ENCODE measurements at regions of chr2 and their contacts with region 1.

Region 1: GRCh38 chr2:29841386-29842004 is 79.9 kb downstream of the ALK start:
- DNase-seq: peak; percentile 27
- ATAC-seq: peak; percentile 63; the same call in 1 of the 2 replicates
- H3K4me3 ChIP-seq: no peak overlapping the region
- H3K27ac ChIP-seq: no peak overlapping the region
- H3K4me1 ChIP-seq: no peaks in the 10 kb centered on the region
- H3K27me3 ChIP-seq: peaks cover 4% of the 10 kb centered on the region; the same call in 1 of the 2 replicates
- CTCF ChIP-seq: peak; percentile 93

Region 2: DNA sequence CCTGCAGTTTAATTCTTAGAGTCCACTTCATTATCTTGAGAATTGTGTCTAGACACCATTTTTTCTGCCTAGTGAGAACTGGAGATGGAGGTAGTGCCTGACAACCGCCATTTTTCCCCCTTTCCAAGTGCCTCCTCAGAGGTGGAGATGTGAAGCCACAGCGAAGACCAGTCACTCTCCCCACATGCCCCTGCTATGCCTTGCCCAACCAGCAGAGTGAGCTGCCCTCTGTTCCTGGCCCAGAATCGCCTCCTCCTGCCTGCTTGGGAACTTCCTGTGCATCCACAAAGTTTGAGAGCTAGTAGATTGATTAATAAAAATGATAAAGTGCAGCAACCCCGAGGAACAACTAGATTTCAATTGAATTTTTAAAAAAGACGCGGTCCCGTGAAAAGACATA is 603.0 kb before region 1 on chr2:
- CTCF ChIA-PET with region 1: no interaction called
- POLR2A ChIA-PET with region 1: no interaction called
- in situ Hi-C with region 1: no loop called
- intact Hi-C with region 1: loop called (anchors 10 kb)
- DNase-seq: peak; percentile 24
- ATAC-seq: peak; percentile 83
- H3K4me3 ChIP-seq: no peak overlapping the region
- H3K27ac ChIP-seq: no peak overlapping the region
- H3K4me1 ChIP-seq: no peaks in the 10 kb centered on the region
- H3K27me3 ChIP-seq: no peaks in the 10 kb centered on the region; the same call in 1 of the 2 replicates
- CTCF ChIP-seq: peak; percentile 83

Region 3: GRCh38 chr2:29314816-29315571 is 526.5 kb before region 1 on chr2:
- CTCF ChIA-PET with region 1: interaction called, 10 read pairs
- POLR2A ChIA-PET with region 1: no interaction called
- in situ Hi-C with region 1: no loop called
- intact Hi-C with region 1: no loop called
- DNase-seq: no peak
- ATAC-seq: no peak
- H3K4me3 ChIP-seq: no peak overlapping the region
- H3K27ac ChIP-seq: no peak overlapping the region
- H3K4me1 ChIP-seq: no peaks in the 10 kb centered on the region
- H3K27me3 ChIP-seq: peaks cover 9% of the 10 kb centered on the region
- CTCF ChIP-seq: no peak

Region 4: DNA sequence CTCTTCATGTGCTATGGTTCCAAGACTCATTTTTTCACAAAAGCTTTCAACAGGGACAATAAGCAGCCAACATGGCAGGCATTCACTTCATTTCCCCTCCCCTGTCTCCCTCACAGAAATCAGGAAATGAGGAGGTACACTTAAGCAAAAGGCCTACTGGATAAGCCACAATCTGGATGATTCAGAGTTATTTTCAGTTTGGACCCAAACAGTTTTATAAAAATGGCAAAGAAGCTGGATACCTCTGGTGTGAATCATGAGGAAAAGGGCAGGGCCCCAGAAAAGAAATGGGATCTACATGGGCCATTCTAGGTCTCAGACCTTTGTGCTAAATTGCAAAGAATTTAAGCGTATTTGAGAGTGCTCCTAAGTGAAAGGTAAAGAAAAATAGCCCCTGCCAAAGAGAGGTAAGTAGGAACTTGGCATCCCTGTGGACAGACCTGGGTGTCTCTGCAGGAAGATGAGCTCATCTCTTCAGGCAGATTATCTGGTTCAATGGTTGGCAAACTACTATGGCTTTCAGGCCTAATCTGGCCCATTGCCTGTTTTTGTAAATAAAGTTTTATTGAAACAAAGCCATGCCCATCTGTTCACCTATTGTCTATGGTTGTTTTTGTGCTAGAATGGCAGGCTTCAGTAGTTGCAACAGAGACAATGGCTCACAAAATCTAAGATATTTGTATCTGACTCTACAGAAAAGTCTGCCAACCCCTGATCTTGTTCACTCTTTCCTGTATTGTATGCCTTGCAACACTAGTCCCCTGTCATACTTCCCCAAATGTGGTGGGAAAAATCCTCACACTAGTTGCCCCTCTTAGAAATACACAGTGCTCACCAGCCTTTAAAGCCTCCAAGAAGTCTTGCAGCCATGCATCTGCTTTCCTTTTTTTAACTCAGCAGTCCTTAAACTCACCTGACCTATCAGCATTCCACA is 235.1 kb before region 1 on chr2:
- CTCF ChIA-PET with region 1: no interaction called
- POLR2A ChIA-PET with region 1: no interaction called
- in situ Hi-C with region 1: no loop called
- intact Hi-C with region 1: no loop called
- DNase-seq: no peak
- ATAC-seq: no peak
- H3K4me3 ChIP-seq: no peak overlapping the region
- H3K27ac ChIP-seq: no peak overlapping the region
- H3K4me1 ChIP-seq: no peaks in the 10 kb centered on the region
- H3K27me3 ChIP-seq: no peaks in the 10 kb centered on the region; the same call in 1 of the 2 replicates
- CTCF ChIP-seq: no peak

Region 5: DNA sequence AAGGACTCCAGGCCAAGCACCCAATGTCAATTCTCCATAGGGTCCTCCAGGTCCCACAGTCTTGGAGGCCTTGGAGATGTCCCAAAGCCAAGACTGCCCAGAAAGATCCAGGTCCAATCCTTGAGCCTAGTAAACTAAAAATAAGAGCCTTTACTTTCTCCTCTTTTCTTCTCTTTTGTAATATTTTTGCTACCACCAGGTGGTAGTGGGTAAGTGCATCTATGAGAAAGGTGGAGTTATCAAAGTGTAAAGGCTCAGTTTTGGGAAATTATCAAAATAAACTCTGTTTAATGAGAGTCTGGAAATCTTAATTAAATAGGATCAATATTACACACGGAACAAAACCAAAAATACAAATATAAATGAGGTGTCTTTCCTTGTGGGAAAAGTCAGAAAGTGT is 196.5 kb before region 1 on chr2:
- CTCF ChIA-PET with region 1: no interaction called
- POLR2A ChIA-PET with region 1: no interaction called
- in situ Hi-C with region 1: no loop called
- intact Hi-C with region 1: loop called (anchors 10 kb)
- DNase-seq: no peak
- ATAC-seq: no peak
- H3K4me3 ChIP-seq: no peak overlapping the region
- H3K27ac ChIP-seq: no peak overlapping the region
- H3K4me1 ChIP-seq: no peaks in the 10 kb centered on the region
- H3K27me3 ChIP-seq: peaks cover 2% of the 10 kb centered on the region; the same call in 1 of the 2 replicates
- CTCF ChIP-seq: 0 out of 2 replicates have a peak, but pooled peaks have one; percentile 4

Region 6: DNA sequence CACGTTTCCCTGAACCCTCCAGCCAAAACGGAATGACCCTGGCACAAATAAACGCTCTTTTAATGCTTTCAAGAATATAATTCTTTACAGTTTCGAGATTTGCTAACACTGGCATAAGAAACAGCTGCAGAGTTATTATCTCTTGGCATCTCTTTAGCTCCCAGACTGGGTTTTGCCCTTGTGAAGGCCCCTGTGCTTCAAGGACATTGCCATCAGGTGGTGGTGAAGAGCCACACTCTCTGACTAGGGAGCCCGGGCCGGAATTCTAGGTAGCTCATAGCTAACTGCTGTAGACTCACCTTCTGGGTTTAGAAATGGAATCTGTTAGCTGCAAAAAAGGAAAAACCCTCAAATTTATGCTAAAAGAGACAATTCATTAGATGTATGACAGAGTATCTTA is 1310.0 kb after region 1 on chr2:
- CTCF ChIA-PET with region 1: no interaction called
- POLR2A ChIA-PET with region 1: no interaction called
- in situ Hi-C with region 1: no loop called
- intact Hi-C with region 1: no loop called
- DNase-seq: no peak
- ATAC-seq: no peak
- H3K4me3 ChIP-seq: no peak overlapping the region
- H3K27ac ChIP-seq: no peak overlapping the region
- H3K4me1 ChIP-seq: no peaks in the 10 kb centered on the region
- H3K27me3 ChIP-seq: peaks cover 11% of the 10 kb centered on the region
- CTCF ChIP-seq: peak; percentile 36; the same call in 1 of the 2 replicates

Measured in Panc1 (cell line).